ENCODE measurements at regions of chr14 and their contacts with region 1.

Region 1: GRCh38 chr14:24431569-24432258 is 2.0 kb downstream of the KHNYN start:
- DNase-seq: peak; percentile 76 to 87
- ATAC-seq: peak; percentile 51 to 70
- H3K4me3 ChIP-seq: peak overlapping the region in 3 of 4 donors; percentile 62 to 81 (median 76)
- H3K27ac ChIP-seq: peak overlapping the region; percentile 85 to 90 (median 86)
- H3K4me1 ChIP-seq: peaks cover 19 to 22% of the 10 kb centered on the region in 2 donors
- H3K27me3 ChIP-seq: no peaks in the 10 kb centered on the region
- CTCF ChIP-seq: peak; percentile 79 to 92 (median 88)
- POLR2A ChIP-seq: no peak

Region 2: GRCh38 chr14:24232121-24232644 is 199.5 kb before region 1 on chr14 and contains the start of gene NEDD8:
- in situ Hi-C with region 1: loop called in 3 of 4 experiments (anchors 10 to 25 kb)
- intact Hi-C with region 1: no loop called
- DNase-seq: peak; percentile 89 to 93
- ATAC-seq: peak; percentile 92 to 95
- H3K4me3 ChIP-seq: peak within 1 kb of the TSS; percentile 71 to 91 (median 86)
- H3K27ac ChIP-seq: peak within 1 kb of the TSS; percentile 85 to 96 (median 92)
- H3K4me1 ChIP-seq: peaks cover 32 to 41% of the 10 kb centered on the region in 2 donors
- H3K27me3 ChIP-seq: no peaks in the 10 kb centered on the region
- CTCF ChIP-seq: no peak
- POLR2A ChIP-seq: peak; percentile 54 to 81
- total RNA-seq, gene NEDD8: 141 to 178 (median 162) TPM

Region 3: GRCh38 chr14:24310646-24311604 is 120.8 kb before region 1 on chr14 and contains the start of gene LTB4R:
- in situ Hi-C with region 1: no loop called
- intact Hi-C with region 1: loop called (anchors 5 kb)
- DNase-seq: peak; percentile 38 to 74
- ATAC-seq: peak; percentile 76 to 85
- H3K4me3 ChIP-seq: peak within 1 kb of the TSS; percentile 51 to 75 (median 55)
- H3K27ac ChIP-seq: peak within 1 kb of the TSS; percentile 71 to 81 (median 73)
- H3K4me1 ChIP-seq: peaks cover 12 to 19% of the 10 kb centered on the region in 2 donors
- H3K27me3 ChIP-seq: no peaks in the 10 kb centered on the region
- CTCF ChIP-seq: peak in 4 of 5 experiments; percentile 40 to 54 (median 46)
- POLR2A ChIP-seq: no peak
- total RNA-seq, gene LTB4R: 0.13 to 2.2 (median 0.75) TPM

Region 4: DNA sequence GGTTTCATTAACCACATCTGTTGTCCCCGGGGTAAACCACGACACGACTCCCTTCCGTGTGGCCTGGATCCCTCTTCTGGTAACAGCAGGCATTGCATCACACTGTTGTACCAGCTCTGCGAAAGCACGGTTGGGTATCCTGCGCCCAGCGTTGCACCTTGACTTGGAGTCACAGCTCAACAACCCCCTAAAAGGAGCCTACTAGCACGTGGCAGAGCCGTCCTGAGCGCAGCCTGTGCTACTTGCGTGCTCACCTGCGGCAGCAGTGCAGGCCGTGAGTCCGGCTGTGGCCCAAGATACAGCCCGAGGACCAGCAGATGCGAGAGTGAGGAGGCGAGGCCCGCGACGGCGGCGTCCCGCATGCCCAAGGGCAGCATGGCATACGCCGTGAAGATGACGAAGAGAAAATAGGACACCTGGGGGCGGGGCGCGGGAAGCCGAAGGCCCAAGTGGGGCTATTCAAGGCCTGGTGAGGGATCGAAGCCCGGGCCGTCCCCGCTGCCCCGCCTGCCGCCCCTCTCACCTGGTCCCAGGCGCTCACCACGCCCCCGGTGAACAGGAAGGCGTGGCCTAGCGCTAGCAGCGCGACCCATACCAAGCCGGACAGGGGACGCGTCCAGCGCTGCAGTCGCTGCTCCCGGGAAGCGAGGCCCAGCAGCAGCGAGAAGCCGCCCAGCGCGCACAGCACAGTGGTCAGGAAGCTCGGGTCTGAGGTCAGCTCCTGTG is 99.3 kb before region 1 on chr14:
- in situ Hi-C with region 1: loop called (anchors 5 to 10 kb)
- intact Hi-C with region 1: loop called (anchors 1 kb)
- DNase-seq: peak; percentile 43 to 45
- ATAC-seq: peak; percentile 57 to 72
- H3K4me3 ChIP-seq: peak overlapping the region in 3 of 4 donors; percentile 19 to 23 (median 19)
- H3K27ac ChIP-seq: no peak overlapping the region
- H3K4me1 ChIP-seq: peaks cover 9 to 25% of the 10 kb centered on the region in 2 donors
- H3K27me3 ChIP-seq: peaks cover 19 to 45% (median 39%) of the 10 kb centered on the region in 3 donors
- CTCF ChIP-seq: peak; percentile 29 to 65 (median 48)
- POLR2A ChIP-seq: no peak

Region 5: DNA sequence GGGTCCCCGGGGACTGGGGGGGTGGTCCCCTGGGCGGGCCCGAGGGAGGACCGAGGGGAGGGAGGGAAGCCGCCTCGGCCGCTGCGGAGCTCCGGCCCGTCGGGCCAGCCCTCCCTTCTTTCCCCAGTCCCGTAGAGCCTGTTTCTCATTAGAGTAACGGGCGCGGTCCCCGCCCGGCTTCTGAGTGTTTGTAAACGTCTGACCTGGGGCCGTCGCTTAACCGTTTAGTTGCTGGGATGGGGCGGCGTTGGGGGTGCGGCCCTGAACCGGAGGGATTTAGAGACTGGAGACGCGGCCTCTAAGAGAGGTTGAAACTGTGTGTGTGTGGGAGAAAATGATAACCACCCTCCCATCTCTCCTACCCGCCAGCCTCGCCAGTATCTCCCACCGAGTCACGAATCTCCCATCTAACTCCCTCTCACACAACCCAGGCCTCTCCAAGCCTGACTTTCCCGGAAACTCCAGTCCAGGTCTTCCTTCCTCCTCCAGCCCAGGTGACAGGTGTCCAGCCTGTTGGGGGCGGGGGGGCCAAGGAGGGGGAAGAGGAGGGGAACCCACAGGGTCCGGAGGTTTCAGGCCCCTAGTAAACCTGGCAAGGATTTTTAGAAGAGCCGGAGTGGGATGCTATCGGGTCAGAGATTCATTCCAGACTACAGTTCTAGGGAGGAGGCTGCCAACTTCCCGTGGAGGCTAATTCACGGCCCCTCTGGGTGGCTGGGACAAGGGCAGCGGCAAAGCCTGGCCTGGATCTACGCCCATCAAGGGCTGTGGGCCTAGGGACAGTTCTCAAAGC is 64.8 kb before region 1 on chr14:
- in situ Hi-C with region 1: loop called in 1 of 4 experiments (anchors 5 kb)
- intact Hi-C with region 1: loop called (anchors 2 kb)
- DNase-seq: peak; percentile 58 to 73
- ATAC-seq: peak; percentile 48 to 60
- H3K4me3 ChIP-seq: peak overlapping the region; percentile 44 to 62 (median 55)
- H3K27ac ChIP-seq: peak overlapping the region; percentile 74 to 85 (median 80)
- H3K4me1 ChIP-seq: peaks cover 10% of the 10 kb centered on the region in 2 donors
- H3K27me3 ChIP-seq: peaks cover 38 to 46% (median 43%) of the 10 kb centered on the region in 3 donors
- CTCF ChIP-seq: no peak
- POLR2A ChIP-seq: peak in 1 of 2 donors; percentile 57

Region 6: DNA sequence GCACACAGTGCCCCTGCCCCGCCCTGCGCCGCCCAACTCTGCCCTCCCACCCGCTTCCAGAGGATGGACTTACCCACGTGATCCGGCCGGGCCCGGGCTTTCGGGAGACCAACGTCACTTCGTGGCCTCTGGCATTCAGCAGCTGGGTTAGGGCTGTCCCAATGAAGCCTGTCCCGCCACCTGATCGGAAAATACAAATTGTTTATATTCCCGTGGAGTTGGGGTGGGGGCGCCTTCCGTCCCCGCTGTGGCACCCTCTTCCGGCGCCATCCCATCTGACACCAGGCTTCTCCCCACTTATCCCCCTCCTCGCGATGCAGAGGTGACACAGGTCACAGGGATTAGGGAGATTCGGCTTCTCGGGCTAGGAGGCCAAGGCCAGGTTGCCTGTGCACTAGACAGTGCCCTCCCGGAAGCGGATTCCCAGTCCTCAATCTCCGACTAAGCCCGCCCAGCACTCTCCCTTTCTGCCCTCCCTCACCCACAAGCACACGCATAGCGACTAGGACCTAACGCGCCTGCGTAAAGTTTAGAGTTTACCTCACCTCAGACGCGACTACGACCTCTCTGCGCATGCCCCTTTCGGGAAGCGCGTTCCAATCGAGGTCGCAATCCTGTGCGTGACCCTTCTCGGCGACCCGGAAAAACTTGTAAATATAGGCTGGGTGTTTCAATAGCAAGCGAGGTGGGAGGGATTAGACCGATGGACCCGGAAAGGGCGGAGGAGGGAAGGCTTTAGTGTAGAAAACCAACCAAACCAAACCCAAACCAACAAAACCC is 10.7 kb after region 1 on chr14 and contains the start of gene SDR39U1:
- in situ Hi-C with region 1: no loop called
- intact Hi-C with region 1: loop called (anchors 2 kb)
- DNase-seq: peak; percentile 96 to 97
- ATAC-seq: peak; percentile 99
- H3K4me3 ChIP-seq: peak within 1 kb of the TSS; percentile 71 to 89 (median 82)
- H3K27ac ChIP-seq: peak within 1 kb of the TSS; percentile 97 to 99 (median 98)
- H3K4me1 ChIP-seq: peaks cover 35 to 39% of the 10 kb centered on the region in 2 donors
- H3K27me3 ChIP-seq: peaks cover 0 to 9% (median 0%) of the 10 kb centered on the region in 3 donors
- CTCF ChIP-seq: no peak
- POLR2A ChIP-seq: peak; percentile 83 to 88
- total RNA-seq, gene SDR39U1: 21.7 to 51.4 (median 38.3) TPM